A673 (cell line): ENCODE measurements at regions of chr5 and their contacts with region 1.

Region 1: DNA sequence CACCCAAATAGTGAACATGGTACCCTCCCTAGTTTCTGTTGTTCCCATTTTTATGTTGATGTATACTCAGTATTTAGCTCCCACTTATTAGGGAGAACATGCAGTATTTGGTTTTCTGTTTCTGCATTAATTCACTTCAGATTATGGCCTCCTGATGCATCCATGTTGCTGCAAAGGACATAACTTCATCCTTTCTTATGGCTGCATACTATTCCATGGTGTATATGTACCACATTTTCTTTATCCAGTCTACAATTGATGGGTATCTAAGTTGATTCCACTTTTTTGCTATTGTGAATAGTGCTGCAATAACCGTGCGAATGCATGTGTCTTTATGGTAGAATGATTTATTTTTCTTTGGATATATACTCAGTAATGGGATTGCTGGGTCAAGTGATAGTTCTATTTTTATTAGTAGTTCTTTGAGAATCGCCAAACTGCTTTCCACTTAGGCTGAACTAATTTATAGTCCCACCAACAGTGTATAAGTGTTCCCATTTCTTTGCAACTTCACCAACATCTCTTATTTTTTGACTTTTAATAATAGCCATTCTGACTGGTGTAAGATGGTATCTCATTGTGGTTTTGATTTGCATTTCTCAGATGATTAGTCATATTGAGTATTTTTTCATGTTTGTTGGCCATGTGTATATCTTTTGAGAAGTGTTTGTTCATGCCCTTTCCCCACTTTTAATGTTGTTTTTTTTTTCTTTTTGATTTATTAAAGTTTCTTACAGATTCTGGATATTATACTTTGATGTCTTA is 79.6 kb downstream of the SMIM15 start:
- DNase-seq: no peak
- H3K4me3 ChIP-seq: no peak overlapping the region
- H3K27ac ChIP-seq: no peak overlapping the region
- H3K4me1 ChIP-seq: no peaks in the 10 kb centered on the region
- H3K27me3 ChIP-seq: no peaks in the 10 kb centered on the region
- CTCF ChIP-seq: no peak

Region 2: GRCh38 chr5:61100437-61100836 is 17.7 kb after region 1 on chr5:
- CTCF ChIA-PET with region 1: interaction called, 12 read pairs
- POLR2A ChIA-PET with region 1: no interaction called
- intact Hi-C with region 1: no loop called
- DNase-seq: no peak
- H3K4me3 ChIP-seq: no peak overlapping the region
- H3K27ac ChIP-seq: no peak overlapping the region
- H3K4me1 ChIP-seq: peaks cover 2% of the 10 kb centered on the region
- H3K27me3 ChIP-seq: no peaks in the 10 kb centered on the region
- CTCF ChIP-seq: no peak